ENCODE measurements at regions of chr11 and their contacts with region 1.

Region 1: GRCh38 chr11:44538375-44539054 is 26.9 kb upstream of the CD82 start:
- DNase-seq: peak; percentile 72
- H3K4me3 ChIP-seq: no peak overlapping the region
- H3K27ac ChIP-seq: no peak overlapping the region
- H3K4me1 ChIP-seq: no peaks in the 10 kb centered on the region
- H3K27me3 ChIP-seq: peaks cover 4 to 5% of the 10 kb centered on the region in 2 experiments
- CTCF ChIP-seq: peak; percentile 91 to 95
- POLR2A ChIP-seq: no peak

Region 2: DNA sequence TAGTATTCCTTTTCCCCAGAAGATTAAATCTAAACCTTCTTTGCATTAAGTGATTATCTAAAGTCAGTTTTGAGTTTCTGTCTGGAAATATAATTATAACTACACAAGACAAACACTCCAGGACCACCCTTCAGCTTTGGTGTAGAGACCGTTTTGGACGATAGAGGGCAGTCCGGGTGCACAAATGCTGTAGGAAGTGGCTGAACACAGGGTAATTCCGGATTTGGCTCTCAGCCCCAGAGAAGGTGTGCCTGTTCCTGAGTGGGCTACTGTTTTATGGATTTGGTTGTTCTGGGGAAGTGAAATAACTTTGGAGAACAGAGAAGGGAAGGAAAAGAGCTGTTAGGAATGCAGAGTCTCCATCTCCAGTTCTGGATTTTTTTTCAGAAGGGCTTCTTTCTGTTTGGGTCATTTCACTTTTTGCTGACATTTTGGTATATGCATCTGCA is 428.3 kb before region 1 on chr11:
- CTCF ChIA-PET with region 1: interaction called, 7 read pairs
- POLR2A ChIA-PET with region 1: no interaction called
- dilution Hi-C with region 1: no loop called
- intact Hi-C with region 1: loop called (anchors 1 kb)
- DNase-seq: peak; percentile 74
- H3K4me3 ChIP-seq: no peak overlapping the region
- H3K27ac ChIP-seq: no peak overlapping the region
- H3K4me1 ChIP-seq: no peaks in the 10 kb centered on the region
- H3K27me3 ChIP-seq: no peaks in the 10 kb centered on the region
- CTCF ChIP-seq: peak; percentile 76 to 79
- POLR2A ChIP-seq: no peak

Region 3: DNA sequence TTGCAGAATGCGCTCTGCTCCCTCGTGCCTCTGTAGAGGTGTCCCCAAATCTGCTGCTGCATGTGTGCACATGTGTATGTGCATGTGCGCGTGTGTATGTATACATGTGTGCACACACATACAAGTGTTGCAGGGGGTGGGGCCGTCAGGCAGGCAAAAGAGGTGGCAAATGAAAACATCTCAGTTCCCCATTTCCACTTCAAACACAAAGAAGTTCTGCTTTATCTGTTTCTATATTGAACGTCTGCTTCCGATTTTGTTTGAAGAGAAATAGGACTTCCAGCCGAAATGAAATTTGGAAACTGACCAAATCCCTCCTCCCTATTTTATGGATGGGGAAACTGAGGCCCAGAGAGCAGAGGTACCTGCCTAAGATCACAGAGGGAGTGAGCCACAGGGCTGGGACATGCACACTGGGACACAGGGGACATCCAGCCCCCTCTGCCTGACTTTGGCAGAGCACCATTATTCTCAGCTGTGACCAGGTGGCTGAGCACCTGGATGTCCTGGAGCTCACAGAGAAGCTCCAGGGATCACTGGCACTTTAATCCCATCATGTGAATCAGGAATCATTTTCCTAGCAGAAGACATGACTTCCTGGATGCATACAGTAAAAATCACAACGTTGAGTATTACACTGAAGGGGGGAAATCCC is 187.4 kb before region 1 on chr11:
- CTCF ChIA-PET with region 1: no interaction called
- POLR2A ChIA-PET with region 1: no interaction called
- dilution Hi-C with region 1: no loop called
- intact Hi-C with region 1: no loop called
- DNase-seq: no peak
- H3K4me3 ChIP-seq: no peak overlapping the region
- H3K27ac ChIP-seq: no peak overlapping the region
- H3K4me1 ChIP-seq: no peaks in the 10 kb centered on the region
- H3K27me3 ChIP-seq: no peaks in the 10 kb centered on the region
- CTCF ChIP-seq: no peak
- POLR2A ChIP-seq: no peak

Region 4: GRCh38 chr11:44483919-44484610 is 54.5 kb before region 1 on chr11:
- CTCF ChIA-PET with region 1: no interaction called
- POLR2A ChIA-PET with region 1: no interaction called
- dilution Hi-C with region 1: no loop called
- intact Hi-C with region 1: loop called (anchors 2 kb)
- DNase-seq: peak; percentile 12
- H3K4me3 ChIP-seq: no peak overlapping the region
- H3K27ac ChIP-seq: no peak overlapping the region
- H3K4me1 ChIP-seq: no peaks in the 10 kb centered on the region
- H3K27me3 ChIP-seq: peaks cover 0 to 1% of the 10 kb centered on the region in 2 experiments
- CTCF ChIP-seq: peak; percentile 29 to 51
- POLR2A ChIP-seq: no peak

Region 5: DNA sequence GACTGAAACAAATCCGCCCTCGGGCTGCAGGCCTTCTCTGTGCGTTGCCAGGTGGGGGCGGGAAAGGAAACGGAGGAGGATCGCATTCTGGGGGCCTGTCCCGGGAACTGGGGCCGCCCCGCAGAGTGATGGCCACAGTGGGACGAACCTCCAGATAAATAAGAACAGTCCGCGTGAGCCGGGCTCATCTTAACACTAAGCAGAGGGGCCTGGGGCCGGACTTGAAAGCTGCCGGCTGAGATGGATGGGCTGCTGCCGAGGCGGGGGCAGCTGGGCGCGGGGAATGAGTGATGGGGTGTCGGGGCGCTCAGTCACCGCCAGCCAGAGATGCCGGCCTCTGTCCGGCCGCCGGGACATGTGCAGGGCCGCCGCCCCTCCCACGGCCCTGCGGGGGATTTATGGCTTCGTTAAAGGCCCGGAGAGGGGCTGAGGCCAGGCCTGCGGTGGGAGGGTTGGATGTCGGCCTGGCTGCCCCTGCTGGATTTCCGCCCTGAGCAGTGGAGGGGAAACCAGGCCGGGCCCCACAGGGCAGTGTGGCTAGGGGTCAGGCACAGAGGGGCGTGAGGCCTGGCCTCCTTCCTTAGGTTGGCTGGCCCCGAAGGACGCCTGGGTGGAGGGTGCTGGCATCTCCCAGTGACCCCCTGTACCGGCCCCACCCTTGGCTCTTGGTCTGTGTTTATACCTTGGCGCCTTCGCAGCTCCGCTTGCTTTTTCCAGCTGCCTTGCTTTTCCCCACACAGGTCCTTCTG is 18.4 kb before region 1 on chr11:
- CTCF ChIA-PET with region 1: interaction called, 22 read pairs
- POLR2A ChIA-PET with region 1: no interaction called
- dilution Hi-C with region 1: no loop called
- intact Hi-C with region 1: loop called (anchors 1 kb)
- DNase-seq: no peak
- H3K4me3 ChIP-seq: no peak overlapping the region
- H3K27ac ChIP-seq: no peak overlapping the region
- H3K4me1 ChIP-seq: no peaks in the 10 kb centered on the region
- H3K27me3 ChIP-seq: peaks cover 11 to 24% of the 10 kb centered on the region in 2 experiments
- CTCF ChIP-seq: no peak
- POLR2A ChIP-seq: no peak

Region 6: DNA sequence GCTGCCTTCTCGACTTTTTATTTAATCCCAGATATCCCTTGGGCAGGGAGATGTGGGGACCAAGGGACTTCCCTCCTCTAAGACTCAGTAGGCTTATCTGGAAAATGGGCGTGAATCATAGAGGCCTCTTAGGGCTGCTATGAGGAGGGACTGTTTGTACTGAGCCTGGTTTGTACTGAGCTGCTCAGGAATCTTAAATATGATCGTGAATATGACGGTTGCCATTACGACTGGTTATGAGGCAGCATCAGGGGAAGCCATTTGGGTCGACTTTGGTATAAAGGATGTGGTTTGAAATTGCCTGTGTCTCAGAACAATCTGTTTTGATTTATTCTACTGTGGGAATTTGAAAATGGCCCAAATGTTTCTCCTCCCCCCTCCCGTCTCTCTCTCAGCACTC is 208.8 kb after region 1 on chr11:
- CTCF ChIA-PET with region 1: no interaction called
- POLR2A ChIA-PET with region 1: no interaction called
- dilution Hi-C with region 1: no loop called
- intact Hi-C with region 1: no loop called
- DNase-seq: no peak
- H3K4me3 ChIP-seq: no peak overlapping the region
- H3K27ac ChIP-seq: no peak overlapping the region
- H3K4me1 ChIP-seq: peaks cover 7% of the 10 kb centered on the region
- H3K27me3 ChIP-seq: no peaks in the 10 kb centered on the region
- CTCF ChIP-seq: no peak
- POLR2A ChIP-seq: no peak